ENCODE measurements at regions of chr22 and their contacts with region 1.

Region 1: GRCh38 chr22:36252754-36253517 is at the start of gene APOL1:
- DNase-seq: no peak
- H3K4me3 ChIP-seq: no peak within 1 kb of the TSS
- H3K27ac ChIP-seq: no peak within 1 kb of the TSS
- H3K27me3 ChIP-seq: no peaks in the 10 kb centered on the region
- CTCF ChIP-seq: no peak

Region 2: DNA sequence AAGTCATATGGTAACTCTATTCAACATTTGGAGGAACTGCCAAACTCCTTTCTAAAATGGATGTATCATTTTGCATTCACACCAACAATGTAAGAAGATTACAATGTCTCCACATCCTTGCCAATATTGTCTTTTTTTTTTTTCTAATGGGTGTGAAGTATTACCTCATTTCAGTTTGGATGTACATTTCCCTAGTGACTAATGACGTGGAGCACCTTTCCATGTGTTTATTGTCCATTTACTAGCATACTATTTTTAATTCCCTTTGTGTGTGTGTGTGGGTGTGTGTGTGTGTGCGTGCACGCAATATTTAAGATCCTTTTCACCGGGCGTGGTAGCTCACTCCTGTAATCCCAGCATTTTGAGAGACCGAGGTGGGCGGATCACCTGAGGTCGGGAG is 155.1 kb before region 1 on chr22:
- in situ Hi-C with region 1: no loop called
- DNase-seq: no peak
- H3K4me3 ChIP-seq: no peak overlapping the region
- H3K27ac ChIP-seq: no peak overlapping the region
- H3K27me3 ChIP-seq: no peaks in the 10 kb centered on the region
- CTCF ChIP-seq: no peak

Region 3: DNA sequence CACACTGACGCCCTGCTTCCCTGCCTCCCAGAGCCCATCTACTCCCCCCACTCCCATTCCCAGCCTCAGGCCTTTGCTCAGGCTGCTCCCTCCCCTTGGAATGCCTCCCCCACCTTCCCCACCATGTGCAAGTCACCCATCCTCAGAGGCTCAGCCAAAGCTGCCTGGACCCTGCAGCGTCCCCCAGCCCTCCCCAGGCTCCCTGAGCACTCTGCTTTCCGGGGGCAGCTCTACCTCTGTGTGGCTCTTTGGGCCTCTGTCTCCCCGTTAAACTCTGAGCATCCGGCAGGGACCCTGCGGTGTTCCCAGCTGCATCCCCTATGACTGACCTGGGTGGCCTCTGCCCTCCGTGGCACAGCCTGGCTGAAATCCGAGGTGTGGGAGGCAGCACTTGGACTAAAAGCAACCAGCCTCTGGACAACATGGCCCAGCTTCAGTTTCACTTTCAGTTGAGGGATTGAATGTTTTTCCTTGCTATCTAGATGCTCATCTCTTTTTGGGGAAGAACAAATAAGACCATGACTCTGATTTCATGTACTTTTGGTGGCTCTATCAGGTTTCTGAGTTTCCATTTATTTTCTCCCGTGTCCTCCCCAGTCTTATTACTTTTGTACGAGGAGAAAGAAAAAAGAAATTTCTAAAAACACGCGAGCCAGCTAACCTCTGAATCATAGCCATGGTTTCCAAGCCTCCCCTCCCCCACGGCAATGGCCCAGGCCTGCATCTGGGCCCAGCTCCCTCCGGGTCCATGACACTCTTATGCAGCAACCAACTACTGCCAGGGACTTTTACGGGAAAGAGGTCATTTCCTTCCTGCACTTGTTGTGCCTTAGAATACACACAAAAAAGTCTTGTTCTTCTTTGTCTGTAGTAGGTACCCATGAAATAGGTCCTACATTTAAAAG is 96.2 kb before region 1 on chr22:
- in situ Hi-C with region 1: loop called (anchors 25 kb)
- DNase-seq: peak; percentile 81
- H3K4me3 ChIP-seq: peak overlapping the region; percentile 44
- H3K27ac ChIP-seq: peak overlapping the region; percentile 92
- H3K27me3 ChIP-seq: no peaks in the 10 kb centered on the region
- CTCF ChIP-seq: no peak

Region 4: GRCh38 chr22:36365020-36365411 is 112.1 kb after region 1 on chr22:
- in situ Hi-C with region 1: no loop called
- DNase-seq: peak; percentile 92
- H3K4me3 ChIP-seq: no peak overlapping the region
- H3K27ac ChIP-seq: peak overlapping the region; percentile 89
- H3K27me3 ChIP-seq: no peaks in the 10 kb centered on the region
- CTCF ChIP-seq: no peak

Measured in brain microvascular endothelial cell (primary cell).